Activated CD8-positive, alpha-beta T cell treated with anti-CD3 and anti-CD28 coated beads for 36 hours (primary cell): ENCODE measurements at regions of chr17 and their contacts with region 1.

Region 1: DNA sequence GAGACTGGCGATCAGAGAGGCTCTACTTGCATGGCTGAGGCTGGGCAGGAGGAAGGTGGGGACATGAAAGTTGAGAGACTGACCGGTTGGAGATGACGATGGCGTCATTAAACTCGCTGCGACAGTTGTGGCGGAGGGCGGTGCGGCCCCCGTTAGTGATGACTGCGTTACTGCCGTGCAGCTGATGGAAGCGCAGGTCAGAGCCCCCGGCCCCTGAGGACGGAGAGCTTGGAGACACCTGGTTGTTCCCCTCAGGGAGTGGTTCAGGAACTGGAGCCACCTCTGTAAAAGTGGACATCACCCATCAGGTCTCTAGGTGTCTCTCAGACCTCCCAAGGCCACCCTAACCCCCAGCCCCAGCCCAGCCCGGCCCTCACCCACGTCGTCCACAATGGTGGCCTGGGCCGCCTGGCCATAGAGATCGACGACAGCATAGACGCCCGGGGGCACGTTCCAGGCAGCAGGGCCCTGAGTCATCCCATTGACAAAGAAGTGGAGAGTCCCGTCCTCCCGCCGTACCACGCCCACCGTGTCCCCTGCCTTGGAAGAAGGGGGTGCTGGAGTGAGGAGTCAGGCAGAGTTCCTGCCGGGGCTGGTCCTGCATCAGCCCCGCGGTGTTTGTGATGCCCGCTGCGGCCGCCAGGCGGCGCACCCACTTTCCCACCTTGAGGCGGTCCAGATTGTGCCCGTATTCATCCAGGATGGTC is 5.3 kb downstream of the NEURL4 start:
- DNase-seq: peak; percentile 78
- ATAC-seq: peak; percentile 62
- H3K4me3 Mint-ChIP-seq: no peak overlapping the region
- H3K27ac Mint-ChIP-seq: no peak overlapping the region
- H3K4me1 Mint-ChIP-seq: peaks cover 29% of the 10 kb centered on the region
- H3K27me3 Mint-ChIP-seq: no peaks in the 10 kb centered on the region
- CTCF ChIP-seq: peak; percentile 86

Region 2: DNA sequence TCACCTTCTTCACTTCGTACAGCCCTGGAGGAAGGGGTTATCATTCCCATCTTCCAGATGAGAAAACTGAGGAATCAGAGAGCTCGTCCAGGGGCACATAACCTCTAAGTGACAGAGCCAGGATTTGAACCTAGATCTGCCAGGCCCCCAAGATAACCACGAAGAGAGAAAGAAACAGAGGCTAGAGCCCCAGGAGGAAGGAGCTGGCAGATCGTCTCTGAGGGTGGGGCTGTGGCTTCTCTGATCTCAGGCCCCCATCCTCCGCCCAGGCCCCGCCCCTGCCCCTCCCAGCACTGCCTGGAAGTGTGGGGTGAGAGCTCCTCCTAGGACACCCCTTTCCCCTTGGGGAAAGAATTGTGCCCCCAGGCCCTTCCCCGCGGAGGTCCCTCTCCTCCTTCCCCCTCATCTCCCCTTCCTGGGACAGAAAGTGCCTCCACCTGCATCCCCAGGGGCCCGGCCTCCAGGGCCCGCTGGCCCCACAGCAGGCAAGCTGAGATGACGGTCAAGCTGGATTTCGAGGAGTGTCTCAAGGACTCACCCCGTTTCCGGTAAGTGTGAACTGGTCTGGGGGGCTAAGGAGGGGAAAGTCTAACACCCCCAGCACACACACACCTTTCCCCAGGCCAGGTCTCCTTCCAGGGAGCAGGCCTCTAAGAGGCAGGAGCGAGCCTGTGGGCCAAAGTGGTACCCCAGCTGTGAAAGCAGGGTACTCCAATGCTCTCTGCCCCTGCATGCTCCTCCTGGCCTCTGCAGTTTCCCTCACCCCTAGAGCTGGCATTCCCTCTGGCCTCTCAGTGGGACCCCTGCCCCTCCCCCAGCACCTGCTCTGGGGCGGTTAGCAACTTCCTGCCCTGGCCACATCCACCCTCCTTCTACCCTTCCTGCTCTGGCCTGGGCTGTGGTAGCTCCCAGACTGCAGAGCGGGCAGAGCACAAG is 12.6 kb after region 1 on chr17 and contains the start of gene ACAP1:
- CTCF ChIA-PET with region 1: interaction called, 60 read pairs
- POLR2A ChIA-PET with region 1: interaction called, 5 read pairs
- intact Hi-C with region 1: no loop called
- DNase-seq: peak; percentile 93
- ATAC-seq: peak; percentile 94
- H3K4me3 Mint-ChIP-seq: peak within 1 kb of the TSS; percentile 89
- H3K27ac Mint-ChIP-seq: peak within 1 kb of the TSS; percentile 93
- H3K4me1 Mint-ChIP-seq: peaks cover 47% of the 10 kb centered on the region
- H3K27me3 Mint-ChIP-seq: no peaks in the 10 kb centered on the region
- CTCF ChIP-seq: no peak
- total RNA-seq, gene ACAP1: 309 to 342 TPM

Region 3: DNA sequence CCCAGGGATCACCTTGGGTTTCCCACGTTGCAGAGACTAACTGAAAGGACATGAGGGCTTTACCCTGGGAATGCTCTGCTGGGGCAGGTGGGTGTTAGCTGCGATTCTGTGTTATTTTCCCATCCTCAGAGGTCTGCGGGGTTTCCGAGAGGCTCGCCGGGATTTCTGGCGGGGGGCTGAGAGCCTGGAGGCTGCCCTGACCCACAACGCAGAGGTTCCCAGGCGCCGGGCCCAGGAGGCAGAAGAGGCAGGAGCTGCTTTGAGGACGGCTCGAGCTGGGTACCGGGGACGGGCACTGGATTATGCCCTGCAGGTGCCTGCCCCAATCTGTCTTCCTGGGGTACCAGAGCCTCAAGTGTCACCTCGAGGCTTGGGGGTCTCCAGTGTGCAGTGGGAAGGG is 19.4 kb after region 1 on chr17:
- CTCF ChIA-PET with region 1: interaction called, 60 read pairs
- POLR2A ChIA-PET with region 1: interaction called, 10 read pairs
- intact Hi-C with region 1: no loop called
- DNase-seq: no peak
- ATAC-seq: no peak
- H3K4me3 Mint-ChIP-seq: no peak overlapping the region
- H3K27ac Mint-ChIP-seq: peak overlapping the region; percentile 72
- H3K4me1 Mint-ChIP-seq: peaks cover 17% of the 10 kb centered on the region
- H3K27me3 Mint-ChIP-seq: no peaks in the 10 kb centered on the region
- CTCF ChIP-seq: no peak